Activated CD4-positive, alpha-beta memory T cell treated with anti-CD3 and anti-CD28 coated beads for 36 hours (primary cell): ENCODE measurements at regions of chr14 and their contacts with region 1.

Region 1: GRCh38 chr14:99480917-99481744 is at the start of gene CCNK:
- DNase-seq: peak; percentile 100
- H3K4me3 Mint-ChIP-seq: peak within 1 kb of the TSS; percentile 97
- H3K27ac Mint-ChIP-seq: peak within 1 kb of the TSS; percentile 94
- H3K4me1 Mint-ChIP-seq: peaks cover 55% of the 10 kb centered on the region
- H3K27me3 Mint-ChIP-seq: no peaks in the 10 kb centered on the region
- total RNA-seq, gene CCNK: 86.6 to 90.4 TPM

Region 2: DNA sequence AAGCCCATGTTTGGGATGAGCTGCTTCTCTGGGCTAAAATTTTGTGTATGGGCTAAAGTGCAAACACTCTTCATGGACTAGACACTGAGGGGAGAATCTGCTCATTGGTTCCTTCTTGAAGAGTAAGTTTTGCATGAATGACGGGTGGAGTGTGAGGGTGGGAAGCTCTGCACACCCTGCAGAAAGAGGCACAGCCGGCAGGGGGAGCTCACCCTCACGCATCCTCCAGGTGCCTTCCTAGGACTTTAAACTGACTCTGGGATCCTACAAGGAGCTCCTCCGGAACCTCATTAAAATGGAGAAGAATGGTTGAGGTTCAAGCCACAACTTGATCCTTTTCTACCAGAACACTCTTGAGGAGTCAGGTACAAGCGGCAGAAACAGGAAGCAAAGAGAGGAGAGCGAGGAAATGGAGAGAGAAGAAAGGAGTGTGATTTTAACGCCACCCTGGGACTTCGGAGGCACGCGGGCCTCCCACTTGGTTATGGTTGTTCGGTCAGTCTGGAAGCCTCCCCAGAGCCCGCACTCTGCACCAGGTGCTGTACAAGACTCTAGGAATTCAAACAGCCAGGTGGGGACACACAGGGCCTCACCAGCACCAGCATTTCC is 88.0 kb before region 1 on chr14:
- CTCF ChIA-PET with region 1: interaction called, 10 read pairs
- POLR2A ChIA-PET with region 1: no interaction called
- intact Hi-C with region 1: no loop called
- DNase-seq: peak; percentile 51
- H3K4me3 Mint-ChIP-seq: no peak overlapping the region
- H3K27ac Mint-ChIP-seq: no peak overlapping the region
- H3K4me1 Mint-ChIP-seq: peaks cover 10% of the 10 kb centered on the region
- H3K27me3 Mint-ChIP-seq: no peaks in the 10 kb centered on the region

Region 3: DNA sequence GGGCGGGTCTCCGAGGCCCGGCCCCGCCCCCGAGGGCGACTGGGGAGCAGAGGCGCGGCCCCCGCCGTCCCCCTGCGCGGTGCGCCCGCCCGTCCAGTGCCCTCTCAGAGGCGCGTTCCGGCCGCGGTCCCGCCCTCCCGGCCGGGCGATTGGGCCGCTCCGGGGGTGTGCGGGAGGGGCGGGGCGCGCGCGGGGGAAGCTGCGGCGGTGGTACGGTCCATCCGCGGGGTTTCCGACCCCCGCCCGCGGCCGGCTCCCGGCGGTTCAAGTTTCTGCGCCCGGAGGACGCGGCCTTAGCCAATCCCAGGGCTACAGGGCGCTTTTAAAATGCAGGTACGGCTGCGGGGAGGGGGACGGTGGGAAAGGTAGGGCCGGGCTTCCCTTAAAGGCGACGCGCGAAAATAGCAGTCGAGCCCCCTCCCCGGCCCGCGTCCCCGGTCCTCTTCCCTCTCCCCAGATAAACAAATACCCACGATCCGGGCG is 123.2 kb after region 1 on chr14:
- CTCF ChIA-PET with region 1: no interaction called
- POLR2A ChIA-PET with region 1: interaction called, 13 read pairs
- intact Hi-C with region 1: loop called (anchors 1 kb)
- DNase-seq: peak; percentile 95
- H3K4me3 Mint-ChIP-seq: peak overlapping the region; percentile 90
- H3K27ac Mint-ChIP-seq: peak overlapping the region; percentile 79
- H3K4me1 Mint-ChIP-seq: peaks cover 26% of the 10 kb centered on the region
- H3K27me3 Mint-ChIP-seq: no peaks in the 10 kb centered on the region

Region 4: DNA sequence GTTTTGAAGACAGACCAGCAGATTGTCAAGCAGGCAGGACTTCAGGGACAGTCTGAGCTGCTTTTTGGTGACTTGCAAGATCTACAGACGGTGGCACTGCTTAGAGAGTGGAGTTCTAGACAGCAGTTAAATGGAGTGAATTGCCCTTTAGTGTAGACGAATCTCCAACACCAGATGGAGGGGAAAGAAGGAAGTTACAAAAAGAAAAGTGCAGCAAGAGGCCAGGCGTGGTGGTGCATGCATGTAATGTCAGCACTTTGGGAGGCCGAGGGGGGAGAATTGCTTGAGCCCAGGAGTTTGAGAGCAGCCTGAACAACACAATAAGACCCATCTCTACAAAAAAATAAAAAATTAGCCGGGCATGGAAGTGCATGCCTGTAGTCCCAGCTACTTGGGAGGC is 155.4 kb after region 1 on chr14:
- CTCF ChIA-PET with region 1: no interaction called
- POLR2A ChIA-PET with region 1: no interaction called
- intact Hi-C with region 1: no loop called
- DNase-seq: no peak
- H3K4me3 Mint-ChIP-seq: no peak overlapping the region
- H3K27ac Mint-ChIP-seq: no peak overlapping the region
- H3K4me1 Mint-ChIP-seq: no peaks in the 10 kb centered on the region
- H3K27me3 Mint-ChIP-seq: peaks cover 3% of the 10 kb centered on the region

Region 5: GRCh38 chr14:100078991-100079725 is 598.0 kb after region 1 on chr14:
- CTCF ChIA-PET with region 1: no interaction called
- POLR2A ChIA-PET with region 1: no interaction called
- intact Hi-C with region 1: loop called (anchors 5 kb)
- DNase-seq: peak; percentile 88
- H3K4me3 Mint-ChIP-seq: peak overlapping the region; percentile 63
- H3K27ac Mint-ChIP-seq: peak overlapping the region; percentile 87
- H3K4me1 Mint-ChIP-seq: peaks cover 96% of the 10 kb centered on the region
- H3K27me3 Mint-ChIP-seq: no peaks in the 10 kb centered on the region